ENCODE measurements at regions of chr1 and their contacts with region 1.

Region 1: GRCh38 chr1:101247404-101248287 is 10.8 kb downstream of the S1PR1 start:
- DNase-seq: no peak
- H3K4me3 ChIP-seq: no peak overlapping the region
- CTCF ChIP-seq: no peak

Region 2: DNA sequence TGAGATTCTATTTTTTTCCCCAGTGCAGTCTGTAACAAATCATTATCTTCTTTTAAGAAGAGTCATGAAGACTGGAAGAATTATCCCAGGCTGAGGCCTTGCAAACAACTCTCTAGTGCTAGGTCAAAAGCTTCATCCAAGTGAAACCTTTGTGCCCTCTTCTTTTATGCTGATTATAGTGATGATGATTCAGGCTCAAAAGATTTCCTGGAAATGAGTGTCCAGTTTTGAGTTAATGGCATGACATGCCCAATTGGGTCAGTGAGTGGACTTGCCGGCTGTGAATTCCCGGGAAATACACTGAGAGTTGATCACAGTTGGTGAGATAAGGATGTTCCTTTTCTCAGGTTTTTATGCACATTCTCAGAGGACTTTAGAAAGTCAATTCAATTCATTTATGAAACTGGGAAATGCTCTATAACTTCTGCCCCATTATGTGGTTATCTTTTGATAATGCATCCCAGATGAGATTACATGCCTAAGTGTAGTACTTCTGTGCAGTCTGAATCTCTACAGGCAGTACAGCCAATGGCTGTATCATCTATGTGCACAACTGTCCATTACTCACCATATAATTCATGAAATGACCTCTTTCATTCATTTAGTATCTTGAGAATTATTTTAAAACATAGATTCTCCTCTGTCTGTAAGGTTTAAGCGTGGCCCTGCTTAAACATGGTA is 55.3 kb after region 1 on chr1:
- in situ Hi-C with region 1: loop called (anchors 5 kb)
- DNase-seq: no peak
- H3K4me3 ChIP-seq: no peak overlapping the region
- CTCF ChIP-seq: no peak

Measured in astrocyte of the cerebellum (primary cell).